Esophagus muscularis mucosa (tissue), 4 donors: ENCODE measurements at regions of chr20 and their contacts with region 1.

Region 1: GRCh38 chr20:36132802-36133211 is 21.7 kb upstream of the EPB41L1 start:
- DNase-seq: no peak
- H3K4me3 ChIP-seq: no peak overlapping the region
- H3K27ac ChIP-seq: no peak overlapping the region
- H3K4me1 ChIP-seq: no peaks in the 10 kb centered on the region
- H3K27me3 ChIP-seq: no peaks in the 10 kb centered on the region
- CTCF ChIP-seq: no peak
- EP300 ChIP-seq: no peak
- POLR2A ChIP-seq: no peak

Region 2: DNA sequence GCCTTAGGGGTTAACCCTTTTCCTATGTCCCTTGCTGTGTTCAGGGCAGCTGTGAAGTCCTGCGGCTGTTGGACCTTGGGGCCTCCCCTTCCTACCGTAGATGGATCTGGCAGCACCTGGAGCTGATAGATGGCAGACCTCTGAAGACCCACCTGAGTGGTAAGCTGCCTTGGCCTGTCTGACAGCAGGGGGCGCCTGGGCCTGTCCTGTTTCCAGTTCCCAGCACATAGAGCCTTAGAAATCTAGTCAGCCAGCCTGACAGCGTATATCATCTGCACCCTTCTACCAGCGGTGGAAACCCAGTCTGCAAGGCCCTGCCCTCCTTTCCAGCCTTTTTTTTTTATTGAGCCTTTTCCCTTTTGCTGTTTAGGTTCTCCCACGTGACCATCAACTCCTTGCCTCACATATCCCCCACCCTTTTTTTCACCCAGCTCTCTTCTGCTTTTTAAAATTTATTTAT is 137.8 kb before region 1 on chr20:
- intact Hi-C with region 1: loop called (anchors 1 kb)
- DNase-seq: peak; percentile 96
- H3K4me3 ChIP-seq: no peak overlapping the region
- H3K27ac ChIP-seq: no peak overlapping the region
- H3K4me1 ChIP-seq: peaks cover 0 to 7% (median 3%) of the 10 kb centered on the region in 4 donors
- H3K27me3 ChIP-seq: no peaks in the 10 kb centered on the region
- CTCF ChIP-seq: peak; percentile 84 to 90 (median 89)
- EP300 ChIP-seq: no peak
- POLR2A ChIP-seq: no peak

Region 3: GRCh38 chr20:36010825-36011224 is 122.0 kb before region 1 on chr20:
- intact Hi-C with region 1: no loop called
- DNase-seq: no peak
- H3K4me3 ChIP-seq: no peak overlapping the region
- H3K27ac ChIP-seq: no peak overlapping the region
- H3K4me1 ChIP-seq: no peaks in the 10 kb centered on the region
- H3K27me3 ChIP-seq: no peaks in the 10 kb centered on the region
- CTCF ChIP-seq: no peak
- EP300 ChIP-seq: no peak
- POLR2A ChIP-seq: no peak